H1 (cell line): ENCODE measurements at regions of chr6 and their contacts with region 1.

Region 1: GRCh38 chr6:74091136-74091793 is 395.3 kb downstream of the CD109 start:
- DNase-seq: no peak
- H3K4me3 ChIP-seq: no peak overlapping the region
- H3K27ac ChIP-seq: no peak overlapping the region
- H3K4me1 ChIP-seq: no peaks in the 10 kb centered on the region
- H3K27me3 ChIP-seq: no peaks in the 10 kb centered on the region
- CTCF ChIP-seq: peak in 2 of 3 experiments; percentile 32 to 65; a peak in 2 of 4 replicates
- EP300 ChIP-seq: no peak
- POLR2A ChIP-seq: no peak
- RAD21 ChIP-seq: peak; percentile 61

Region 2: GRCh38 chr6:73079978-73080377 is 1011.3 kb before region 1 on chr6:
- CTCF ChIA-PET with region 1: no interaction called
- POLR2A ChIA-PET with region 1: no interaction called
- DNase-seq: no peak
- H3K4me3 ChIP-seq: no peak overlapping the region
- H3K27ac ChIP-seq: no peak overlapping the region
- H3K4me1 ChIP-seq: peaks cover 0 to 7% (median 5%) of the 10 kb centered on the region in 4 experiments; a peak in 3 of 7 replicates
- H3K27me3 ChIP-seq: no peaks in the 10 kb centered on the region
- CTCF ChIP-seq: no peak
- EP300 ChIP-seq: no peak
- POLR2A ChIP-seq: no peak
- RAD21 ChIP-seq: no peak

Region 3: DNA sequence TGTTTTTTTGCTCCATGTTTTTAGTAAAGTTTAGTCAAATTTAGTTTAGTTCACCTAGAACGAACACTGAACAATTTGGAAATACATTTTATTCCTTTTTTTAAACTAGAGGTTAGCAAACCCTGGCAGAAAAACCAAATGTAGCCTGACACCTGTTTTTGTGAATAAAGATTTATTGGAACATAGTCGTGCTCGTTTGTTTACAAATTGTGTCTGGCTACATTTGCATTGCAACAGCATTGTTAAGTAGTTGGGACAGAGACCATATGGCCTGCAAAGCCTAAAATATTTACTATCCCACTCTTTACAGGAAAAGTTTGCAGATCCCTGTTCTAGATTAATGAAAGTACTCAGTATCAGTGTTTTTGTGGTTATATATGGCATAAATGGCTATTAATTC is 338.3 kb before region 1 on chr6:
- CTCF ChIA-PET with region 1: no interaction called
- POLR2A ChIA-PET with region 1: no interaction called
- DNase-seq: no peak
- H3K4me3 ChIP-seq: no peak overlapping the region
- H3K27ac ChIP-seq: no peak overlapping the region
- H3K4me1 ChIP-seq: no peaks in the 10 kb centered on the region
- H3K27me3 ChIP-seq: no peaks in the 10 kb centered on the region
- CTCF ChIP-seq: no peak
- EP300 ChIP-seq: no peak
- POLR2A ChIP-seq: no peak
- RAD21 ChIP-seq: no peak

Region 4: GRCh38 chr6:73969971-73970970 is 121.0 kb before region 1 on chr6:
- CTCF ChIA-PET with region 1: interaction called, 23 read pairs
- POLR2A ChIA-PET with region 1: interaction called, 3 read pairs
- DNase-seq: no peak
- H3K4me3 ChIP-seq: no peak overlapping the region
- H3K27ac ChIP-seq: no peak overlapping the region
- H3K4me1 ChIP-seq: no peaks in the 10 kb centered on the region
- H3K27me3 ChIP-seq: no peaks in the 10 kb centered on the region
- CTCF ChIP-seq: peak in 2 of 3 experiments; percentile 55 to 65; a peak in 3 of 4 replicates
- EP300 ChIP-seq: peak in 1 of 2 experiments; percentile 66; a peak in 2 of 3 replicates
- POLR2A ChIP-seq: no peak
- RAD21 ChIP-seq: peak; percentile 82 to 84

Region 5: GRCh38 chr6:74000666-74001490 is 90.4 kb before region 1 on chr6:
- CTCF ChIA-PET with region 1: no interaction called
- POLR2A ChIA-PET with region 1: no interaction called
- DNase-seq: no peak
- H3K4me3 ChIP-seq: no peak overlapping the region
- H3K27ac ChIP-seq: no peak overlapping the region
- H3K4me1 ChIP-seq: no peaks in the 10 kb centered on the region
- H3K27me3 ChIP-seq: no peaks in the 10 kb centered on the region
- CTCF ChIP-seq: no peak
- EP300 ChIP-seq: no peak
- POLR2A ChIP-seq: no peak
- RAD21 ChIP-seq: no peak

Region 6: DNA sequence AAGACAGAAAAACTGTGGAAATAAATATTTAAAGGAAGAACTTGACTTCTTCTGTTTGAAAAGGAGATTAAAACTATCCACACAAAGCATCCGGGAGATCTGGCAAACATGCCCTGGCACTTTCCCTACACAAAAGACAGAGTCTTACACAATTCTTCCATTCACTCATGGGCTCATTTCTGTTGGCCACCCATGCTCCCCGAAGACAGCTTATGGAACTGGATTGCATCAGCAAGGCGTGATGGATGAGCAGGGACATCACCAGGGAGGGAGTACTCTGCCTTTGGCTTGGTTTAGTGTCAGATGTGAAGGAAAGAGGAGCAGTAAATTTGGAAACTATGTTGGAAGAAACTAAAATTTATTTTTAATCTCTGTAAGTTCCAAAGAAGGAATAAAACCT is 15.9 kb before region 1 on chr6:
- CTCF ChIA-PET with region 1: interaction called, 11 read pairs
- POLR2A ChIA-PET with region 1: interaction called, 3 read pairs
- DNase-seq: no peak
- H3K4me3 ChIP-seq: no peak overlapping the region
- H3K27ac ChIP-seq: no peak overlapping the region
- H3K4me1 ChIP-seq: no peaks in the 10 kb centered on the region
- H3K27me3 ChIP-seq: no peaks in the 10 kb centered on the region
- CTCF ChIP-seq: no peak
- EP300 ChIP-seq: no peak
- POLR2A ChIP-seq: no peak
- RAD21 ChIP-seq: no peak

Region 7: GRCh38 chr6:74103417-74103816 is 12.2 kb after region 1 on chr6:
- CTCF ChIA-PET with region 1: interaction called, 24 read pairs
- POLR2A ChIA-PET with region 1: no interaction called
- DNase-seq: no peak
- H3K4me3 ChIP-seq: no peak overlapping the region
- H3K27ac ChIP-seq: no peak overlapping the region
- H3K4me1 ChIP-seq: no peaks in the 10 kb centered on the region
- H3K27me3 ChIP-seq: no peaks in the 10 kb centered on the region
- CTCF ChIP-seq: no peak
- EP300 ChIP-seq: no peak
- POLR2A ChIP-seq: no peak
- RAD21 ChIP-seq: no peak

Region 8: GRCh38 chr6:74114428-74114827 is 23.2 kb after region 1 on chr6:
- CTCF ChIA-PET with region 1: interaction called, 14 read pairs
- POLR2A ChIA-PET with region 1: no interaction called
- DNase-seq: no peak
- H3K4me3 ChIP-seq: no peak overlapping the region
- H3K27ac ChIP-seq: no peak overlapping the region
- H3K4me1 ChIP-seq: no peaks in the 10 kb centered on the region
- H3K27me3 ChIP-seq: no peaks in the 10 kb centered on the region
- CTCF ChIP-seq: no peak
- EP300 ChIP-seq: no peak
- POLR2A ChIP-seq: no peak
- RAD21 ChIP-seq: no peak

Region 9: DNA sequence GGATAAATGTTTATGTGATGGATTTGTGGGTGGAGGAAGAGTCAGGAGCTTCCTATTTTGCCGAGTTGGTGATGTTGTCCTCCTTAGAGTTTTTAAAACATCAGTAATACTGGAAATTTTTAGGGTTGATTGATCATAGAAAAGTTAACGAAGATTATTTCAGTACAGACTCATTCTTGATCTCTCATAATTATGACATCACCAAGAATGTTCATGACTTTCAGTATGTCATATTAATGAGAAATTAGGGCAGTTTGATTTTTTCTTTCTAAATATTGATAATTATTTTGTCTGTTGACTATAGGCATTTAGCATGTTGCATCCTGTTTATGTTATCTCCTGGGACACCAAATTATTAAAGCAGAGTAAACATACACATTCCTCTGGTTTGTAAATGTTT is 117.0 kb after region 1 on chr6:
- CTCF ChIA-PET with region 1: interaction called, 12 read pairs
- POLR2A ChIA-PET with region 1: no interaction called
- DNase-seq: no peak
- H3K4me3 ChIP-seq: no peak overlapping the region
- H3K27ac ChIP-seq: no peak overlapping the region
- H3K4me1 ChIP-seq: no peaks in the 10 kb centered on the region
- H3K27me3 ChIP-seq: no peaks in the 10 kb centered on the region
- CTCF ChIP-seq: no peak
- EP300 ChIP-seq: no peak
- POLR2A ChIP-seq: no peak
- RAD21 ChIP-seq: no peak

Region 10: DNA sequence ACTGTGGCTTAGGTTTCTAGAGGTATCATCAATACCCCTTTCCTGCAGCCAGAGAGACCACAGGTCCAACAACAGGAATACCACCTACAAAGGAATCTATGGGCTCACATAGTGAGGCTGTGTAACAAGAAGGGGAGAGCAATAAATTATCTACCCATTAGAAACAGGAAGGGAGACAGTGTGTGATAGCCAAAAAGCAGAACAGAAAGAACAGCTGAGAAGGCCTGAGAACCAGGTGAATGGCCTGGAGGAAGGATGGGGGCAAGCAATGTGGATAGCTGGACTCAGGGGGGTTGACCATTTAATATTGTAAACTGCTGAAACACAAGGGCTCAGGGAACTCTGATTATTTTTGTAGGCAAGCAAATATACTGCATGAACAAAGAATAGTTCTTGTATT is 486.4 kb after region 1 on chr6:
- CTCF ChIA-PET with region 1: interaction called, 10 read pairs
- POLR2A ChIA-PET with region 1: no interaction called
- DNase-seq: no peak
- H3K4me3 ChIP-seq: no peak overlapping the region
- H3K27ac ChIP-seq: no peak overlapping the region
- H3K4me1 ChIP-seq: no peaks in the 10 kb centered on the region
- H3K27me3 ChIP-seq: no peaks in the 10 kb centered on the region
- CTCF ChIP-seq: no peak
- EP300 ChIP-seq: no peak
- POLR2A ChIP-seq: no peak
- RAD21 ChIP-seq: no peak